Panc1 (cell line): ENCODE measurements at regions of chr4 and their contacts with region 1.

Region 1: GRCh38 chr4:25552580-25553271 is 102.9 kb upstream of the SLC34A2 start:
- DNase-seq: no peak
- ATAC-seq: no peak
- H3K4me3 ChIP-seq: no peak overlapping the region
- H3K27ac ChIP-seq: no peak overlapping the region
- H3K4me1 ChIP-seq: no peaks in the 10 kb centered on the region
- H3K27me3 ChIP-seq: no peaks in the 10 kb centered on the region
- CTCF ChIP-seq: no peak

Region 2: DNA sequence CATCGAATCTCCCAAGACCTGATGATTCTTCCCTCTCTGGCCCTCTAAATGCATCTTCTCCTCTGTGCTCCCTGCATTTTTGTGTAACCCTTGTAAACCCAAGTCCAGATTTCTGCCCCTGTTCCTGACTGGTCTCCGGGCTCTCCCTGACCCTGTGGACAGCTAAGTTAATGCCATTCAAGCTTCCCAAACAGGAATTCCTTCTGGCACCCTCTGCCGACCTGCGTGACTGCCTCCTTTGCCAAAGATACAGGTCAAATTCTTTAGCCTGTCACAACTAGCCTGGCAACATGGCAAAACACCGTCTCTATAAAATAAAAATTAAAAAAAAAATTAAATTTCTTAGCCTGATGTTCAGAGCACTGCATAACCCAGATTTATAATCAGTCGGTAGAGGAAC is 40.2 kb before region 1 on chr4:
- CTCF ChIA-PET with region 1: no interaction called
- POLR2A ChIA-PET with region 1: interaction called, 14 read pairs
- in situ Hi-C with region 1: no loop called
- intact Hi-C with region 1: no loop called
- DNase-seq: no peak
- ATAC-seq: no peak
- H3K4me3 ChIP-seq: no peak overlapping the region
- H3K27ac ChIP-seq: no peak overlapping the region
- H3K4me1 ChIP-seq: no peaks in the 10 kb centered on the region
- H3K27me3 ChIP-seq: no peaks in the 10 kb centered on the region
- CTCF ChIP-seq: no peak

Region 3: DNA sequence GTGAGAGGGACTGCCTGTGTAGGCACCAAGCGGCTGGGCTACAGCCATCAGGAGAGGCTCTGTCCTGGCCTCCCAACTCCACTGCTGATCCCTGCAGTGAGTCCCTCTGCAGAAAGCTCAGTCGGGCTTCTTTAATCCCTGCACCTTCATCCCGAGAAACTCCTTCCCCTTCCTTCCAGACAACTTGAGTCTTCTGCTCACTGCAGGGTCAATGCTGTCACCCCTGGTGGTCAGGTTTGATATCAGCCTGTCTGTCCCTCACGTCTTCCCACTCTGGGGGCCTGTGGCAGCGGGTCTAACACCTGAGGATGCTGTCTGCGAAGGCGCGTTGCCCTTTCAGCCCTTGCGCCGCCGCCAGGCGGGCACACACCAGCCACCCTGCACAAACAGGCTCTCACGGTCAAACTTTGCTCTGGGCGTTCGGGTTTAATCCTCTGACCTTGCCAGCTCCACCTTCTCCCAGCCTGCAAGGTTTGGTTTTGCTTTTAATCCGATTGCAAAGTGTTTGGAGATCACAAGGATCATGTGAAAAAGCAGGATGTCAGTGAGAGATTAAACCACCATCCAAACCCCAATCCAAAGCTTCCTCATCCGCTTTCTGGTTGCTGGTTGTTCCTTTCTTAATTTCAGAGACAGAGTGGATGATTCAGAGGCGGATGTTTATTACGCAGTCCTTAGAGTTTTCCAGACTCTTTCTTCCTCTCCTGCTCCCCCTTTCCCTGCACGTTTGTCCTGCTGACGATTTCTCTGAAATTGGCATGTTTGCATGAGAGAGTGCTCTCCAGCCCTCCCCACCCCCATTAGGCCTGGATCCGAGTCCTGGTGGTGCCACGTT is 28.1 kb after region 1 on chr4:
- CTCF ChIA-PET with region 1: no interaction called
- POLR2A ChIA-PET with region 1: no interaction called
- in situ Hi-C with region 1: no loop called
- intact Hi-C with region 1: loop called (anchors 1 kb)
- DNase-seq: no peak
- ATAC-seq: peak; percentile 51; the same call in 1 of the 2 replicates
- H3K4me3 ChIP-seq: no peak overlapping the region
- H3K27ac ChIP-seq: no peak overlapping the region
- H3K4me1 ChIP-seq: no peaks in the 10 kb centered on the region
- H3K27me3 ChIP-seq: no peaks in the 10 kb centered on the region
- CTCF ChIP-seq: no peak